ENCODE measurements at regions of chr7 and their contacts with region 1.

Region 1: DNA sequence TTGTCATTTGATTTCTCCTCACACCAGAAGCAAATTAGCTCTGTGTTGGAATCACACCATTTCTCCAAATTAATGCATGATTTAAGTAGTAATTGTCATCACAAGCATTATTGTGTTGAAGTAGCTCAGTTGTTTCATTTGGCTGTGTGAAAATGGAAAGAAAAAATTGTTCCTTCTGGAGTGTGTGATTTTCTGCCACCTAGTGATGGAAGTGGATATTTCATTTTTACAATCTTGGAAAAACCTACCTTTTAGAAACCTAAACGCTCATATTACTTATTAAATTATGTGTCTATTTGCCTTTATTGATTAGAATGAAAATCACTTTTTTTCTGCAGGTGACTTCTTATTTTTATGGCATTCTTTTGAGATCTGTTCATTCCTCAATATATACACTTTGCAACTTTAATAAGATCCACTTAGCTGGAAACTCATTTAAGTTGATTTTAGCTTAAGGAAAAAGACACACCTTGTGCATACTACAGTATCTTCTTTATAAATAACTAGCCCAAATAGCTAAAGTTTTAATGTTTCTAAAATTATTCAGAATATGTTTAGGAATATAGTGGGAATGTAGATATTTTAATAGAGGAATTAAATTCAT is 50.0 kb downstream of the SRI start:
- DNase-seq: no peak
- H3K4me3 ChIP-seq: no peak overlapping the region
- H3K27ac ChIP-seq: no peak overlapping the region
- H3K4me1 ChIP-seq: no peaks in the 10 kb centered on the region
- H3K27me3 ChIP-seq: no peaks in the 10 kb centered on the region
- CTCF ChIP-seq: peak; percentile 76

Region 2: GRCh38 chr7:87797798-87798403 is 371.9 kb before region 1 on chr7:
- CTCF ChIA-PET with region 1: interaction called, 3 read pairs
- POLR2A ChIA-PET with region 1: no interaction called
- intact Hi-C with region 1: loop called (anchors 1 kb)
- DNase-seq: peak in 1 of 2 experiments; percentile 35
- H3K4me3 ChIP-seq: no peak overlapping the region
- H3K27ac ChIP-seq: no peak overlapping the region
- H3K4me1 ChIP-seq: no peaks in the 10 kb centered on the region
- H3K27me3 ChIP-seq: no peaks in the 10 kb centered on the region
- CTCF ChIP-seq: peak; percentile 74

Region 3: GRCh38 chr7:87910138-87910537 is 259.7 kb before region 1 on chr7:
- CTCF ChIA-PET with region 1: no interaction called
- POLR2A ChIA-PET with region 1: no interaction called
- intact Hi-C with region 1: loop called (anchors 10 kb)
- DNase-seq: no peak
- H3K4me3 ChIP-seq: no peak overlapping the region
- H3K27ac ChIP-seq: no peak overlapping the region
- H3K4me1 ChIP-seq: no peaks in the 10 kb centered on the region
- H3K27me3 ChIP-seq: no peaks in the 10 kb centered on the region
- CTCF ChIP-seq: no peak

Region 4: DNA sequence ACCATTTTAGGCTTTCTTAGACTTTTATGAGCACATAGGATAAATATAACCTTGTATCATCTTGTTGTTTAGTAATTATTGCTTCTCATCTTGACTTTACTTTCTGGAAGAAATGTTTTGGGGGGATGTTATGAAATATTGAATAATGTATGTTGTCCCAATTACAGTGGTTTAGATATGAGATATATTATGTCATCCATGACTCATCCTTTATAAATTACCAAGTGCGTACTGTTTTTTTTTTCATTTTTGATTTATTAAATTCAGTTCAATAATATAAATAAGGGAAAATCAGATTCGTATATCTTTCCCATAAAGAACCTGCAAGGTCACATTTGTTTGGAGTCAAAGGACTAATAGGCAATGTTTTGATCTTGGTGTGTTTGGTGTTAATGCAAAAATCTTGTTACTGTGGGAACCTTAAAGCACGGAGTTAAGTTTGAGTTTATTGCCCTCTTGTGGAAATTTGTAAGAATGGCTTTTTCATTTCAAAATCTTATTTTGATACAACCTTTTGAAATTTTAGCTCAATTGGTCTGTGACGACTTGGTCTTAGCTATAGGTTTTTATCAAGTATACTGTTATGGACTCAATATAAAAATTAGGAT is 58.6 kb before region 1 on chr7:
- CTCF ChIA-PET with region 1: interaction called, 4 read pairs
- POLR2A ChIA-PET with region 1: no interaction called
- intact Hi-C with region 1: loop called (anchors 2 kb)
- DNase-seq: peak in 1 of 2 experiments; percentile 54
- H3K4me3 ChIP-seq: no peak overlapping the region
- H3K27ac ChIP-seq: no peak overlapping the region
- H3K4me1 ChIP-seq: no peaks in the 10 kb centered on the region
- H3K27me3 ChIP-seq: no peaks in the 10 kb centered on the region
- CTCF ChIP-seq: peak; percentile 76

Region 5: DNA sequence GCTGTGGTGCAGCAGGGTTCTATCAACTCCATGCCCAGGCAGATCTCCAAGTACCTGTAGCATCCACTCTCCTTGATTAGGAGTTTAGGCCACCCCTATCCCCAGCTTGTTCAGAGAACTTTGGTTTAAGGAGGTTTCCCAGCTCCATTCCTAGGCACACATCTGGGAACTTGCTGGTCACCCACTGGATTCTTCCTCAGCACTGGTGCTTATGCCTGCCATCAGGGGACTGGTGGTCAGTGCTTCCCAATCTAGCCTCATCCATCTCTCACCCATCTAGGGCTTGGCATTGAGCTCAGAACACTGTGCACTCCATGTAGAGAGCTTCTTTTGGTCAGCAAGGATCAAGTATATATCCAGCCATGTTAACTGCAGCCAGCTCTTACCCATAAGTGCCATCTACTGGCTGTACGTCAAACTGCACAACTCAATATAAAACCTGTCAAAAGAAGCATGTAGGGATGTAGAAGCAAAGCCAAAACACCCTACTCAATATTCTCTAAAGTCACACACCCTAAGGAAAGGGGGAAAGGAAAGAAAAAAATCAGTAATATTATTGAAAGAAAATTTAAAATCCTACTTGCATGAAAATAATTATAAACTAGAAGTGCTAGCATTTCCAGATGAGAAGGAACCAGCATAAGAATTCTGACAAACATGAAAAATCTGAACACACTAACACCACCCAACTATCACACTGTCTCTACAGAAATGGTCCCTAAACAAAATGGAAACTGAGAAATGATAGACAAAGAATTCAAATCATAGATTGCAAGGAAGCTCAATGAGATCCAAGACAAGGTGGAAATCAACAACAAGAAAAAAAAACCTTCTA is 1453.2 kb after region 1 on chr7:
- CTCF ChIA-PET with region 1: no interaction called
- POLR2A ChIA-PET with region 1: no interaction called
- intact Hi-C with region 1: loop called (anchors 5 kb)
- DNase-seq: peak in 1 of 2 experiments; percentile 12
- H3K4me3 ChIP-seq: no peak overlapping the region
- H3K27ac ChIP-seq: no peak overlapping the region
- H3K4me1 ChIP-seq: no peaks in the 10 kb centered on the region
- H3K27me3 ChIP-seq: no peaks in the 10 kb centered on the region
- CTCF ChIP-seq: peak; percentile 75